Gastrocnemius medialis (tissue), 4 donors: ENCODE measurements at regions of chr17 and their contacts with region 1.

Region 1: DNA sequence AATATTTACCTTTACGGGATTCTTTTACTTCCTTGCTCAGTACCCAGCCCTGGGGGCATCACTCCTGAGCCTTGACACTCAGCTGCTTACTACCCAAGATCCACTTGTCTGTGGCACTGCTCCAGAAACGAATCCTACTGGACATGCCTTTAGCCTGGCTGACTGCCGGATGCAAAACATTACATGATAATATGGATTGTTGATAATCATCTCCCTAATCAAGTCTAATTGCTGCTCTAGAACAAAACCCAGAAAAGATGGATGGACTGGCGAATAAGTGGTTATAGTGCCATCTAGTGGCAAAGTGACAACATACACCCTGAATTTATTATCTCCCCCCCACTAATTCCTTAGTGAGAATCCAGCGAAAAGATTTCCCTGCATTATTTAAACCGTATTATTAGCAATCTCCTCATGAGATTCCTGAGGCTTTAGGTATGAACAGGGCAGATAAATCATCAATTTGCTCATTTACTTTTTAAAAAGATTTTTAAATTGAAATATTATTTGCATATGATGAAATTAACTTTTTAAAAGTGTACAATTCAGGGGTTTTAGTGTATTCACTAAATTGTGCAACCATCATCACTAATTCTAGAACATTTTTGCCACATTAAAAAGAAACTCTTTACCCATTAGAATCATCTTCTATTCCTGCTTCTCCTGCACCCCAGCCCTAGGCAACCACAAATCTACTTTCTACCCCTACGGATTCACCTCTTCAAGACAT is 61.6 kb downstream of the RGS9 start:
- DNase-seq: no peak
- ATAC-seq: peak in 1 of 2 donors; percentile 62
- H3K4me3 ChIP-seq: no peak overlapping the region
- H3K27ac ChIP-seq: no peak overlapping the region
- H3K4me1 ChIP-seq: no peaks in the 10 kb centered on the region
- H3K27me3 ChIP-seq: no peaks in the 10 kb centered on the region
- CTCF ChIP-seq: peak; percentile 50 to 78 (median 68)
- POLR2A ChIP-seq: no peak

Region 2: GRCh38 chr17:64778240-64779097 is 420.3 kb before region 1 on chr17:
- in situ Hi-C with region 1: no loop called
- intact Hi-C with region 1: loop called (anchors 5 kb)
- DNase-seq: no peak
- ATAC-seq: no peak
- H3K4me3 ChIP-seq: peak overlapping the region in 3 of 4 donors; percentile 18 to 22 (median 21)
- H3K27ac ChIP-seq: no peak overlapping the region
- H3K4me1 ChIP-seq: peaks cover 10 to 14% of the 10 kb centered on the region in 2 donors
- H3K27me3 ChIP-seq: peaks cover 0 to 10% (median 7%) of the 10 kb centered on the region in 3 donors
- CTCF ChIP-seq: no peak
- POLR2A ChIP-seq: no peak

Region 3: DNA sequence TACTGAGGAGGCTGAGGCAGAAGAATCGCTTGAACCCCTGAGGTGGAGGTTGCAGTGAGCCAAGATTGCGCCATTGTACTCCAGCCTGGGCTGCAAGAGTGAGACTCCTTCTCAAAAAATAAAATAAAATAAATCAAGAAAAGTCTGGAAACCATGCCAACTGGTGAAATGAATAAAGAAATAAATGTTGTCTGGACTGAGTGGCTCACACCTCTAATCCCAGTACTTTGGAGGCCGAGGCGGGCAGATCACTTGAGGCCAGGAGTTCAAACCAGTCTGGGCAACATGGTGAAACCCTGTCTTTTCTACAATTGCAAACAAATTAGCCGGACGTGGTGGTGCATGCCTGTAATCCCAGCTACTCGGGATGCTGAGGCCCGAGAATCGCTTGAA is 278.8 kb before region 1 on chr17:
- in situ Hi-C with region 1: no loop called
- intact Hi-C with region 1: loop called (anchors 5 kb)
- DNase-seq: peak in 1 of 2 donors; percentile 20
- ATAC-seq: peak; percentile 4 to 9
- H3K4me3 ChIP-seq: peak overlapping the region; percentile 64 to 97 (median 72)
- H3K27ac ChIP-seq: peak overlapping the region; percentile 89 to 97 (median 96)
- H3K4me1 ChIP-seq: no peaks in the 10 kb centered on the region
- H3K27me3 ChIP-seq: no peaks in the 10 kb centered on the region
- CTCF ChIP-seq: no peak
- POLR2A ChIP-seq: no peak

Region 4: DNA sequence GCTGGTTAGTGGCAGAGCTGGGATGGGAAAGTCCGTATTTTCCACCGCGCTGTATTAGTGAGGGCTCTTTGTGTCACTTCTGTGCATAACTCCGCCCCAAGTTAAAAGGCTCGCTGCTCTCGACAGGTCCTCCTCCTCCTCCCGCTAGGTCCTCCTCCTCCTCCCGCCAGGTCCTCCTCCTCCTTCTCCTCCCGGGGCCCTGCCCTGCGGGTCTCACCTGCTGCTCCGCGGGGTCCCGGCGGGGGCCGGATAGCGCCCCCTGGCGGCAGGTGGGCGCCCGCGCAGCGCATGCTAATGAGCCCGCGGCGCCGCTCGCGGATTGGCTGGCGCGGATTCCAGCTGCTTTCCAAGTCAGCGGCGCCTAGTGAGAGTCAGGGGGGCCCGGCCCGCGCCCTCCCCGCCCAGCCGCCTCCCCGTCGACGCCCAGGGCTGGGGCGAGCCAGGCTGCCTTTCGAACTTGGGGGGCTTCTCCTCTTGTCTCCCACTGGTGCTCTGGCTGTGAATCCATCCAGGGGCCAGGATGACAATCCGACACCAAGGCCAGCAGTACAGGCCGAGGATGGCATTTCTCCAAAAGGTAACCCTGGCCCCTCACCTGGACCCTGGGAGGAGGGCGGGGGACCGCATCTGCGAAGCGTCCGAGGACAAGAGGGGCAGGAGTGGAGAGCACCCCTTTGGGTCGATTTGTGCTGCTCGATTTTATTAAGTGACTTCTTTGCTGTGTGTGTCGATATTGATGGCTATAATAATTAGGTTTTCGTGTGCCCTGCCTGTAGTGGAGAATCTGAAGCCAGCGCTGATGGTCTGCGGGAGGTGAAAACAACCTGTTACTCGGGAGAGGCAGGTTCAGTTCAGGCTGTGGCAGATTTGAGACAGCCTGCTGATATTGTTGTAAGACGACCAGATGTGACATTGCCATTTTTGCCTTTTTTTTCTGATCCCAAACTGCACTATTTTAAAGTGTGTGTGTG is 61.5 kb before region 1 on chr17 and contains the start of gene RGS9:
- in situ Hi-C with region 1: loop called in 1 of 4 experiments (anchors 10 kb)
- intact Hi-C with region 1: no loop called
- DNase-seq: peak; percentile 49 to 70
- ATAC-seq: peak; percentile 91 to 95
- H3K4me3 ChIP-seq: peak within 1 kb of the TSS; percentile 45 to 59 (median 57)
- H3K27ac ChIP-seq: peak within 1 kb of the TSS in 1 of 4 donors; percentile 25
- H3K4me1 ChIP-seq: peaks cover 4 to 5% of the 10 kb centered on the region in 2 donors
- H3K27me3 ChIP-seq: peaks cover 0 to 12% (median 3%) of the 10 kb centered on the region in 3 donors
- CTCF ChIP-seq: peak; percentile 89 to 98 (median 97)
- POLR2A ChIP-seq: no peak
- total RNA-seq, gene RGS9: 1.2 to 4.4 (median 2.8) TPM